Activated CD8-positive, alpha-beta T cell treated with anti-CD3 and anti-CD28 coated beads for 36 hours (primary cell): ENCODE measurements at regions of chr15 and their contacts with region 1.

Region 1: GRCh38 chr15:65792130-65792987 is at the start of gene DENND4A:
- DNase-seq: peak; percentile 99
- ATAC-seq: peak; percentile 83
- H3K4me3 Mint-ChIP-seq: peak within 1 kb of the TSS; percentile 96
- H3K27ac Mint-ChIP-seq: peak within 1 kb of the TSS; percentile 98
- H3K4me1 Mint-ChIP-seq: peaks cover 60% of the 10 kb centered on the region
- H3K27me3 Mint-ChIP-seq: no peaks in the 10 kb centered on the region
- CTCF ChIP-seq: no peak
- total RNA-seq, gene DENND4A: 53.1 to 54.7 TPM

Region 2: GRCh38 chr15:65777053-65777452 is 15.3 kb before region 1 on chr15:
- CTCF ChIA-PET with region 1: interaction called, 9 read pairs
- POLR2A ChIA-PET with region 1: interaction called, 30 read pairs
- intact Hi-C with region 1: no loop called
- DNase-seq: no peak
- ATAC-seq: no peak
- H3K4me3 Mint-ChIP-seq: no peak overlapping the region
- H3K27ac Mint-ChIP-seq: no peak overlapping the region
- H3K4me1 Mint-ChIP-seq: peaks cover 35% of the 10 kb centered on the region
- H3K27me3 Mint-ChIP-seq: no peaks in the 10 kb centered on the region
- CTCF ChIP-seq: no peak

Region 3: DNA sequence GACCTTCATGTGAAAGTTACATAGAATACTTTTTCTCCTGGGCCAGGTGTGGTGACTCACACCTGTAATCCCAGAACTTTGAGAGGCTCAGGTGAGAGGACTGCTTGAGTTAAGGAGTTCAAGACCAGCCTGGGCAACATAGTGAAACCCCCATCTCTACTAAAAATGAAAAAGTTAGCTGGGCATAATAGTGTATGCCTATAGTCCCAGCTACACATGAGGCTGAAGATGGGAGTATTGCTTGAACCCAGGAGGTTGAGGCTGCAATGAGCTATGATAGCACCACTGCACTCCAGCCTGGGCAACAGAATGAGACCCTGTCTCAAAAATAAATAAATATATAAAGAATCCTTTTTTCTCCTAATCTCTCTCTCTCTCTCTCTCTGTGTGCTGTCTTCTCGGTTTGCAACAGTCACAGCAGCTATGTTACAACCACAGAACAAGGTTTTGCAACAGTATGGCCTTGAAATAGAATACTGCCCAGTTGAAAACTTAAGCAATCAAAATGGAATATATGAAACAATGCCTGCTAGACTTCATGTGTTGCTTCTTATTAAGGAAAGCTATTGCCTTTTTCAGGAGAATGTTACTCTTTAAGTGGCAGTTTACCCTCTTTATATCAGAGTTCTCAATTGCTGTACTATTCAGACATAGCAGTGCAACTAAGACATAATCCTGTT is 12.0 kb after region 1 on chr15:
- CTCF ChIA-PET with region 1: interaction called, 19 read pairs
- POLR2A ChIA-PET with region 1: interaction called, 37 read pairs
- intact Hi-C with region 1: no loop called
- DNase-seq: no peak
- ATAC-seq: no peak
- H3K4me3 Mint-ChIP-seq: no peak overlapping the region
- H3K27ac Mint-ChIP-seq: peak overlapping the region; percentile 78
- H3K4me1 Mint-ChIP-seq: peaks cover 38% of the 10 kb centered on the region
- H3K27me3 Mint-ChIP-seq: no peaks in the 10 kb centered on the region
- CTCF ChIP-seq: no peak

Region 4: GRCh38 chr15:65818927-65819562 is 26.7 kb after region 1 on chr15:
- CTCF ChIA-PET with region 1: interaction called, 14 read pairs
- POLR2A ChIA-PET with region 1: interaction called, 82 read pairs
- intact Hi-C with region 1: no loop called
- DNase-seq: no peak
- ATAC-seq: peak; percentile 85
- H3K4me3 Mint-ChIP-seq: peak overlapping the region; percentile 4
- H3K27ac Mint-ChIP-seq: peak overlapping the region; percentile 92
- H3K4me1 Mint-ChIP-seq: peaks cover 55% of the 10 kb centered on the region
- H3K27me3 Mint-ChIP-seq: no peaks in the 10 kb centered on the region
- CTCF ChIP-seq: no peak

Region 5: DNA sequence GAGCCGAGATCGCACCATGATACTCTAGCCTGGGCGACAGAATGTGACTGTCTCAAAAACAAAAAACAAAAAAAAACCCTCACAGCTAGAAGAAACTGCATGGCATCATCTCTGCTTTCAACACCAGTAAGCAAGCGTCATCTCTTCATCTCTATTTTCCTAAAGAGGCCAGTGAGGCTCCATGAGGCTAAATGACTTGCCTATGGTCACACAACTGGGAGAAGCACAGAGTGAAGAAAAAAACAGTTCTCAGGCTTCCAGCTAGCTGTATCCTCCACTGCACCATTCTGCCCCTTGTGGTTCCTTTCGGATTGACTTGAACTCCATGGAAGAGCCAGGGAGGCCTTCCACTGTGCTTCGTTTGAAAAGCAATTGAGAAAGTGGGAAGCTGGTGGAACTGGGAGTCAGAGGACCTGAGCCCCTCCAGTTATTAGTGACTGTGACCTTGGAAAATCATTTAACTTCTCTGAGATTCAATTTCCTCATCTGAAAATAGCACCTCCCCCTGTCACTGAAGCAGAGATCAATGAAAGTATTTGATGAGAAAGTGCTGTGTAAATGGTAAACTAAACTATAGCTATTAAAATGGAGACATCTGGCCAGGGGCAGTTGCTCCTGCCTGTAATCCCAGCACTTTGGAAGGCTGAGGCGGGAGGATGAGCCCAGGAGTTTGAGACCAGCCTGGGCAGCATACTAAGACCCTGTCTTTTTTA is 31.8 kb after region 1 on chr15:
- CTCF ChIA-PET with region 1: interaction called, 15 read pairs
- POLR2A ChIA-PET with region 1: interaction called, 82 read pairs
- intact Hi-C with region 1: loop called (anchors 5 kb)
- DNase-seq: peak; percentile 35
- ATAC-seq: peak; percentile 19
- H3K4me3 Mint-ChIP-seq: no peak overlapping the region
- H3K27ac Mint-ChIP-seq: no peak overlapping the region
- H3K4me1 Mint-ChIP-seq: peaks cover 55% of the 10 kb centered on the region
- H3K27me3 Mint-ChIP-seq: no peaks in the 10 kb centered on the region
- CTCF ChIP-seq: no peak

Region 6: DNA sequence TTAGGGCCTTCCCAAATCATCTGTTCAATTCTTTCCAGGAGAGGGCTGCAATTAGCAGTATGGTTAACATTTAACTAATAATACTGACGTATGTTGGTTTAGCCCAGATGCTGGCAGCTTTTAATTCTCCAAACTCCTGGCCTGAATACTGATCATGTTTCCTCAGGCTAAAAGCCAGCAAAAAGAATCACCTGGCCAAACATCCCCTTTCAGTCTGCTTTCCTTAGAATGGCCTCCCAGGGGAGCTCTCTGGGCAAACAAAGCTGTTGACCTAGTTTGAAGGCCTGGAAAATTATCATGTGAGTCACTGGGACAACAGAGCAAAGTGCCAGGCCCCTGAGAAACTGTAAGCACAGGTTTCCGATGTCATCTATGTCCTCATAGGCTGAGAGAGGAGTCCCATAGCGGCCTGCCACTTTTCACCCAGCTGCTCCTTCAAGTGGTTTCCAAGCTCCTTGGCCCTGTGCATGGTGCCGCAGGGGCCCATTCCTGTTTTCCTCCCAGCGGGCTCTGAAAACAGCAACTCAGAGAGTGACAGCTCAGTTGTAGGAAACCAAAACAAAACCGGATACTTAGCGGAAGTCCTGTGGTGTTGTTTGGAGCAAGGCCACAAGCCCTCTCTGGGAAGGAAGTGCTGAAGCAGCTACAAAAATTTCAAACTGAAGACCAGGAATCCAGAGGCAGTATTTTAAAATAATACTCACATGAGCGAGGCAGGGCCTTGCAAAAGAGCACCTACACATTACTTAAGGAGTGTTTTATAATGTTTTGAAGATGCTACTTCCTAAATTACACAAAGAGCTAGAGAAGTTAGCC is 40.4 kb after region 1 on chr15:
- CTCF ChIA-PET with region 1: interaction called, 15 read pairs
- POLR2A ChIA-PET with region 1: interaction called, 14 read pairs
- intact Hi-C with region 1: loop called (anchors 5 kb)
- DNase-seq: peak; percentile 60
- ATAC-seq: peak; percentile 62
- H3K4me3 Mint-ChIP-seq: peak overlapping the region; percentile 66
- H3K27ac Mint-ChIP-seq: peak overlapping the region; percentile 96
- H3K4me1 Mint-ChIP-seq: peaks cover 43% of the 10 kb centered on the region
- H3K27me3 Mint-ChIP-seq: no peaks in the 10 kb centered on the region
- CTCF ChIP-seq: no peak

Region 7: GRCh38 chr15:65962187-65962586 is 169.8 kb after region 1 on chr15:
- CTCF ChIA-PET with region 1: no interaction called
- POLR2A ChIA-PET with region 1: no interaction called
- intact Hi-C with region 1: no loop called
- DNase-seq: no peak
- ATAC-seq: no peak
- H3K4me3 Mint-ChIP-seq: no peak overlapping the region
- H3K27ac Mint-ChIP-seq: no peak overlapping the region
- H3K4me1 Mint-ChIP-seq: no peaks in the 10 kb centered on the region
- H3K27me3 Mint-ChIP-seq: peaks cover 9% of the 10 kb centered on the region
- CTCF ChIP-seq: no peak